ENCODE measurements at regions of chr10 and their contacts with region 1.

Region 1: GRCh38 chr10:123132576-123133477 is 2.9 kb upstream of the HMX3 start:
- DNase-seq: peak; percentile 77 to 97
- H3K4me3 ChIP-seq: no peak overlapping the region
- CTCF ChIP-seq: peak in 1 of 3 donors; percentile 77
- POLR2A ChIP-seq: no peak

Region 2: DNA sequence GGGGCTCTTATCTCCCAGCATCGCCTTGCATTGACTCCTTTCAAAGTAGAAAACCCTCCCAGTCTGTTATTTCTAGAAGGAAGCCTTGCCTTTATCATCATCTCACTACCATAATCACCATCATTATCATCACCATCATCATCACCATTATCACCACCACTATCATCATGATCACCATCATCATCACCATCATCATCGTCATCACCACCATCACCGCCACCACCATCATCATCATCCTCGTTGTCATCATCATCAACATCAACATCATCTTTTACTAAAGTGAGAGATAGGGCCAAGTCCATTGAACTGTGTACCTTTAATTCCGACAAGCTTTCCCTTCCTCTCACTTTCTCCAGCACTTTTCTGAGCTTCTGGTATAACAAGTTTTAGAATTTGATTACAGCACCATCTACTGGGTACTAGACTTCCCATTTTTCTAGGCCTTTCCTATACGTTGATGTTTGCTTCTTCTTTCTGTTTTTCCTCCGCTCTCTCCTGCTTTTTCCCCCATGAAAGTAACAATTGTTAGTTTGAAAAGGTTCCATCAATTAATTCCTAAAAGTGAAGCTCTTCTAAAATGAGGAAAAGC is 247.8 kb after region 1 on chr10:
- intact Hi-C with region 1: loop called (anchors 5 kb)
- DNase-seq: no peak
- H3K4me3 ChIP-seq: no peak overlapping the region
- CTCF ChIP-seq: no peak
- POLR2A ChIP-seq: no peak

Region 3: DNA sequence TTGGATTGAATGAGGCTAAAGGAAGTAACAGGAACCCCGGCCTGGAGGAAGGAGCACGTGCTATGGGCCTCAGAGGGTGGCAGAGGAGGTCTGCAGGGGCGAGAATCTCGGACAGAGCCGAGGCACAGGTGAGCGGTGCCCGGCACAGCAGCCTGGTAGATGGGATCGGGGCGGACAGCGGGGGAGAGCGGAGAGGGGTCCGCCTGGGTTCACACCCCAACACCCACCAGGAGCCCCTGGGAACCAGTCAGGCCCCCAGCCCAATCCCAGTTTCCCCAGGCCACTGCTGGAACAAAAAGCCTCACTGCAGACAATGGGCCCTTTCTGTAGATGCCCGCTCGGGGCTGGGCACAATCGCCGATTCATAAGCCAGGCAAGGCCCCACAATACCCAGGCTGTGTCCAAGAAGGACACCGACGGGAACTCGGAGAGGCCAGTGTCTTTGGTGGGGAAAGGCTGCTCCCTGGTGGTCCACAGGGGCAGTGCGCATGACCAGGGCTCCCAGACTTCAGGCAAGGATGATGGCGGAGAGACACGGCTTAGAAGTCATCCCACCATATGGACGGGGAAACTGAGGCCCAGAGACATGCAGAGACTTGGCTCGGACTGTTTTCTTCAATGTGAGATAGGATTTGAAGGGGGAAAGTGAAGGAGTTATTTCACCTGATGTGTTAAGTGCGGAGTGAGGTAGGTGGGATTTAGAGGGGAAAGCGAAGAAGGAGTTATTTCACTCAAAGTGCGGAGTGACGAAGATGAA is 426.4 kb after region 1 on chr10:
- intact Hi-C with region 1: loop called (anchors 5 kb)
- DNase-seq: peak; percentile 46 to 93
- H3K4me3 ChIP-seq: no peak overlapping the region
- CTCF ChIP-seq: peak in 1 of 3 donors; percentile 86
- POLR2A ChIP-seq: no peak

Measured in lower leg skin (tissue), 4 donors.